Caki2 (cell line): ENCODE measurements at regions of chr10 and their contacts with region 1.

Region 1: DNA sequence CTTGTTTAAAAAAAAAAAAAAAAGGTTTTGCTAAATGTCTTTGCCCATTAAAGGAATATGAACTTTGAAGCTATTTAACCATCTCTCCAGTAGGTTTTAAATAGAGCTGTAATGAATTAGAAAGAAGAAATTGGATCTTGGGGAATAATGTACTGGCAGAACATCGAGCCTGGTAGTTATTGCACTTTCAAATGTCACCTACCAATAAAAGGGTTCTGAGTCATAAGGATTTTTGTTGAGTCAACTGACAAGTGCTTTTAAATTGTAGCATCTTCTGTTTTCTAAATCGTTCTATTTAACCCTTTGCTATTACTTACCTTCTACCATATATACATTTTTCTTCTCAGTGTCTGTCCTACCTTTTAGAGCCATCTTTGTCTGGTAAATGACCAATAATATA is 10.7 kb downstream of the CUTC start:
- DNase-seq: no peak

Region 2: GRCh38 chr10:99809931-99810615 is 67.4 kb after region 1 on chr10:
- in situ Hi-C with region 1: loop called (anchors 10 kb)
- DNase-seq: no peak